ENCODE measurements at regions of chr11 and their contacts with region 1.

Region 1: DNA sequence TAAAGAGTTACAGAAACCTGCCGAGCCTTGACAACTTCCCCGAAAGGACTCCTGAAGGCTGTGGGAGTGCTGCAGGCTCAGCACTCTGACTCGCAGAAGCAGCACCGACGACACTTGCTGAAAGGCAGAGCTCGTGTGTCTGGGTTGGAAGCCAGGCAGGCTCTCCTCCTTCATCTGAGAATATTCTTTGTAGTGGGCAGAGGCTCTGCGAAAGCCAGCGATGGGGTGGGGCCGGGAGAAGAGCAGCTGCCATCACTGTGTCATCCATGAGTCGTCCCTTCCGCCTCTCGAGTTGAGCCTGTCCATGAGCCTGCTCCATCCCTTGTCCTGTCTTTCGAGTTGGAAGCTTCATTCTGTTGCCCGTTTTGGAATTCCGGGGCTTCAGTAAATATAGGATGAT is 11.9 kb downstream of the GLB1L2 start:
- H3K4me3 Mint-ChIP-seq: no peak overlapping the region
- H3K27ac Mint-ChIP-seq: no peak overlapping the region
- H3K4me1 Mint-ChIP-seq: no peaks in the 10 kb centered on the region
- H3K27me3 Mint-ChIP-seq: peaks cover 9% of the 10 kb centered on the region

Region 2: DNA sequence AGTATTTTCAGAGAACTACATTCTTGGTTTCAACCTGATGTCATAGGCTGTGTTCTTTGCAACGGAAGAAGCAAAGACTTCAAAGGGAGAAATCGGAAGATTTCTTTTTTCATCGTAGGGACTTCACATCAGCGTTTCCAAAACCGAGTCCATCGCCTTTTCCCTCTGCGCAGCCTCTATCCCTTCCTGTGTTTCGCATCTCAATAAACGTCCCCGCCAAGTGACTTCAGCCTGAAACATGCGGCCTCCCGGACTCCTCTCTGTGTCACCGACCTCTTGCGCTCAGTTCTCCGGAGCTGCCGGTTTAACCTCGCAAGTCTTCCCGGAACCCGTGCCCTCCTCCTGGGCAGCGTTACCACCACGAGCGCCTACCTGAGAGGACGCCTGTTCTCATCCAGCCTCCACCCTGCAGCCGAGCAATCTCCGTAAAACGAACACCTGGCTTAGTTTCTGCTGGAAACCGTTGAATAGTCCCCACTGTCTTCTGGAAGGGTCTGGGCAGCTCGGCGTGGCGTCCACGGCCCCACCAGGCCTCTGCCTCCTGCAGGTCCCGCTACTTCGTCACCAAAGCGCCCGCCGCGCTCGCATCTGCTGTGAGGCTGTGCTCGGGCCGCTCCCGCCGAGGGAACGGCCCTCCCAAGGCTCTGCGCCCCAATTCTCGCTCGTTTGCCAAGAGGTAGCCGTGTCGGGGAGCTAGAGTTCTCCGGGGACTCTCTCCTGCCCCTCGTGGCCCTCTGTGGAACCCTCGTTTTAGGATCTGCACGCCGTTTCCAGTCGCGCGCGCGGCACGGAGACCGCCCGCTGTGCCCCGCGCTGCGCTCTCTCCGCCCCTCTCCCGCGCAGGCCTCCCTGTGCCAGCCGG is 67.9 kb before region 1 on chr11 and contains the start of gene GLB1L3:
- intact Hi-C with region 1: loop called (anchors 2 kb)
- H3K4me3 Mint-ChIP-seq: peak within 1 kb of the TSS; percentile 55
- H3K27ac Mint-ChIP-seq: no peak within 1 kb of the TSS
- H3K4me1 Mint-ChIP-seq: peaks cover 8% of the 10 kb centered on the region
- H3K27me3 Mint-ChIP-seq: peaks cover 86% of the 10 kb centered on the region

Measured in dendritic cell treated with granulocyte-macrophage colony-stimulating factor and Interleukin-4, amounts not matched to agents 40 ng/mL and 50 ng/mL, for 4 days (primary cell).